Activated CD8-positive, alpha-beta T cell treated with anti-CD3 and anti-CD28 coated beads for 36 hours (primary cell): ENCODE measurements at regions of chr16 and their contacts with region 1.

Region 1: DNA sequence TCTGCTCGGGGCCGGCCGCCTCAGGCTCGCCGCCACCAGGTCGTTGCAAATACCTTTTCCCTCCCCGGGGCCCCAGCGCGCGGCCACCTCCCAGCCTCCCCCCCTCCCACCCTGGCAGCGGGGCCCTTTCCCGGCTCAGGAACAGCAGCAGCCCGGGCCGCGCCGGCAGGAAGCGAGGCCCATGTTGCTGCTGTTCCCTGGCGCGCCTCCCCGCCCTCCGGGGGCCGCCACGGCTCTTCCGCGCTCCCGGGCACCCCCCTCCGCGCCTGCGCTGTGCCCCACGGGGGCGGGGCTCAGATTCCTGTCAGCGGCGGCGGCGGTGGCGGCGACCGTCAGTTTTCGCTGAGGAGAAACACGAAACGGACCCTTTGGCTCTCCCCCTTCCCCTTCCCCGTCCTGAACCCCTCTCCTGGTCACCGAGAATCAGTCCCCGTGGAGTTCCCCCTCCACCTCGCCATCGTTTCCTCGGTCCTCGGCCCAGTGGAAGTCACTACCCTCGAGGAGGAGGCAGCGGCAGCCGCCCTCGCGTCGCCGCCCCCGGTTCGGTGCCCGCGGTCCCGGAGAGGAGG is at the start of gene NFAT5:
- DNase-seq: peak; percentile 90
- ATAC-seq: peak; percentile 54
- H3K4me3 Mint-ChIP-seq: peak within 1 kb of the TSS; percentile 100
- H3K27ac Mint-ChIP-seq: peak within 1 kb of the TSS; percentile 99
- H3K4me1 Mint-ChIP-seq: peaks cover 49% of the 10 kb centered on the region
- H3K27me3 Mint-ChIP-seq: no peaks in the 10 kb centered on the region
- CTCF ChIP-seq: no peak
- total RNA-seq, gene NFAT5: 36.0 to 37.8 TPM

Region 2: GRCh38 chr16:69424053-69424934 is 141.5 kb before region 1 on chr16 and contains the start of gene CYB5B:
- CTCF ChIA-PET with region 1: interaction called, 5 read pairs
- POLR2A ChIA-PET with region 1: interaction called, 10 read pairs
- intact Hi-C with region 1: no loop called
- DNase-seq: peak; percentile 99
- ATAC-seq: peak; percentile 98
- H3K4me3 Mint-ChIP-seq: peak within 1 kb of the TSS; percentile 91
- H3K27ac Mint-ChIP-seq: peak within 1 kb of the TSS; percentile 95
- H3K4me1 Mint-ChIP-seq: peaks cover 32% of the 10 kb centered on the region
- H3K27me3 Mint-ChIP-seq: no peaks in the 10 kb centered on the region
- CTCF ChIP-seq: no peak
- total RNA-seq, gene CYB5B: 159 to 163 TPM

Region 3: GRCh38 chr16:69443927-69444631 is 121.7 kb before region 1 on chr16:
- CTCF ChIA-PET with region 1: interaction called, 5 read pairs
- POLR2A ChIA-PET with region 1: interaction called, 11 read pairs
- intact Hi-C with region 1: no loop called
- DNase-seq: peak; percentile 19
- ATAC-seq: peak; percentile 79
- H3K4me3 Mint-ChIP-seq: peak overlapping the region; percentile 68
- H3K27ac Mint-ChIP-seq: peak overlapping the region; percentile 93
- H3K4me1 Mint-ChIP-seq: peaks cover 42% of the 10 kb centered on the region
- H3K27me3 Mint-ChIP-seq: no peaks in the 10 kb centered on the region
- CTCF ChIP-seq: no peak

Region 4: DNA sequence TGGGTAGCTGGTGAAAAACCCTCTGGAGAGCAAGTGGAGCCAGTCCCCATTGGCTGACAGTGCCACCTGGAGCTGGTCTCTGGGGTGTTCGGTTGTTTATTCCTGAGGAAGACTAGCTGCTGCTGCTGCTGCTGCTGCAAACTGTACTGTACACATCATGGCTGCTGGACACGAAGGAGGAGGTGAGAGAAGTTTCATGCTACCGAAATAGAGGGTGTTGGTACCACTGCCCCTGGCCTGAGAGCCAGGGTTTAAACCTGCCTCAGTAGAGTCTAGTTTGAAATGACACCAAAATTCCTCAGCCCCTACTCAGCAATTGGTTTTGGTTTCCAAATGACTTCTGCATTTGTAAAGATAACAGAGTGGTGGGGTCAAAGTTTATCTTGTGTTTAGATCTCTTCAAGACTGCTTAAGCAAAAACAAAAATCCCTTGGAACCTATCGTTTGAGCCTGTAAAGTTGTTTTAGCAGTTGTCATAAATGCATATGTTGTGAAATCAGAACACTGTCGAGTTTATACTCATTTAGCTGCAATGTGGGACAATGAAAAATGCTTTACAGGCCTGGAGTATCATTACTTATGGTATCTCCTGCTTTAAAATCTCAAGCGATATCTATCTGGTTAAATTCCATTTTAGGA is 100.6 kb before region 1 on chr16:
- CTCF ChIA-PET with region 1: no interaction called
- POLR2A ChIA-PET with region 1: interaction called, 3 read pairs
- intact Hi-C with region 1: loop called (anchors 5 kb)
- DNase-seq: peak; percentile 29
- ATAC-seq: peak; percentile 55
- H3K4me3 Mint-ChIP-seq: no peak overlapping the region
- H3K27ac Mint-ChIP-seq: peak overlapping the region; percentile 79
- H3K4me1 Mint-ChIP-seq: peaks cover 60% of the 10 kb centered on the region
- H3K27me3 Mint-ChIP-seq: no peaks in the 10 kb centered on the region
- CTCF ChIP-seq: no peak

Region 5: DNA sequence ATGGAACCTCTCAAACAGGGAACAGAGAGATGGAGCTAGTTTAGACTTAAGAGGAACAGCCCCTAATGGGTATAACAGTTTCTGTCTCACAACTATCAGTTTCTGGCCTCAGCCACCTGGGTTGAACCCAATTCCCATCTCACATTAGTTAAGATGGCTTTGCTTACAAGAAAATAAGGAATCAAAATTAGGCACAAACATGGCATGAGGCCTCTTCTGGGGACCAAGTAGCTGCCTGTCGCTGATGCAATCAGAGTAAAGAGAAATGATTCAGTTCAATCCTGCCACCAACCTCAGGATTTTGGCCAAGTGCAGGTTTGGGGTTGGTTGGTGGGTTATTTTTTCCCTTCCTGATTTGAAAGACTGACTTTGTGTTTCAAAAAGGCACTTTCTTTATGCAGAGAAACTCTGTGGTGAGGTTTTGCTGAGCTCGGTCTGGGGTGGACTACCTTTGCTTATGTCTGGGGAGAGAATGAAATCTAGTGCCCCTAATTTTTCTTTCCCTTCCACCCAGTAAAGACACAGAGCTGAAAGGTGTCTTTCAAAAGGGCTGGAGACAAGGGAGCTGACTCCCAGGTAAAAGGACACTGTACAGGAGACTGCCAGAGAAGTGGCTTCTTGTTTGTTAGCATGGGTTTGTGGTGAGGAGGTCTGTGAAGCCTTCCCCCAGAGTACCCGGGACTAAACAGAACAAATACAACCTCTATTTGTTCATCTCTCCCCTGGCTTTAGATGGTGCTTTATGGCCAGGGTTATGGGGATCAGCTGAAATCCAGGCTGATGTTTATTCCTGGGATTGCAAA is 44.8 kb before region 1 on chr16:
- CTCF ChIA-PET with region 1: interaction called, 3 read pairs
- POLR2A ChIA-PET with region 1: interaction called, 60 read pairs
- intact Hi-C with region 1: loop called (anchors 5 kb)
- DNase-seq: peak; percentile 84
- ATAC-seq: peak; percentile 86
- H3K4me3 Mint-ChIP-seq: peak overlapping the region; percentile 36
- H3K27ac Mint-ChIP-seq: peak overlapping the region; percentile 94
- H3K4me1 Mint-ChIP-seq: peaks cover 30% of the 10 kb centered on the region
- H3K27me3 Mint-ChIP-seq: peaks cover 1% of the 10 kb centered on the region
- CTCF ChIP-seq: no peak

Region 6: DNA sequence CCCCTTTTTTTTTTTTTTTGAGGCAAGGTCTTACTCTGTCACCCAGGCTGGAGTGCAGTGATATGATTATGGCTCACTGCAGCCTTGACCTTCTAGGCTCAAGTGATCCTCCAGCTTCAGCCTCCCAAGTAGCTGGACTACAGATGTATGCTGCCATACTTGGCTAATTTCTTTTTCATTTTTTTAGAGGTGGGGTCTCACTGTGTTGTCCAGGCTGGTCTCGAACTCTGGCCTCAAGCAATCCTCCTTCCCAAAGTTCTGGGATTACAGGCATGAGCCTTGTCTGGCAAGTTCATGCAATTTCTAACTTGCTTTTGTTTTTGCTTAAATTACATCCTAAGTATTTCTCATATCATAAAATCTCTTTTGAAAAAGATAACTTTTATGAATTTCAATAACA is 33.8 kb before region 1 on chr16:
- CTCF ChIA-PET with region 1: no interaction called
- POLR2A ChIA-PET with region 1: interaction called, 26 read pairs
- intact Hi-C with region 1: loop called (anchors 2 kb)
- DNase-seq: no peak
- ATAC-seq: no peak
- H3K4me3 Mint-ChIP-seq: no peak overlapping the region
- H3K27ac Mint-ChIP-seq: no peak overlapping the region
- H3K4me1 Mint-ChIP-seq: peaks cover 42% of the 10 kb centered on the region
- H3K27me3 Mint-ChIP-seq: no peaks in the 10 kb centered on the region
- CTCF ChIP-seq: no peak